Transverse colon (tissue), 4 donors: ENCODE measurements at regions of chr1 and their contacts with region 1.

Region 1: DNA sequence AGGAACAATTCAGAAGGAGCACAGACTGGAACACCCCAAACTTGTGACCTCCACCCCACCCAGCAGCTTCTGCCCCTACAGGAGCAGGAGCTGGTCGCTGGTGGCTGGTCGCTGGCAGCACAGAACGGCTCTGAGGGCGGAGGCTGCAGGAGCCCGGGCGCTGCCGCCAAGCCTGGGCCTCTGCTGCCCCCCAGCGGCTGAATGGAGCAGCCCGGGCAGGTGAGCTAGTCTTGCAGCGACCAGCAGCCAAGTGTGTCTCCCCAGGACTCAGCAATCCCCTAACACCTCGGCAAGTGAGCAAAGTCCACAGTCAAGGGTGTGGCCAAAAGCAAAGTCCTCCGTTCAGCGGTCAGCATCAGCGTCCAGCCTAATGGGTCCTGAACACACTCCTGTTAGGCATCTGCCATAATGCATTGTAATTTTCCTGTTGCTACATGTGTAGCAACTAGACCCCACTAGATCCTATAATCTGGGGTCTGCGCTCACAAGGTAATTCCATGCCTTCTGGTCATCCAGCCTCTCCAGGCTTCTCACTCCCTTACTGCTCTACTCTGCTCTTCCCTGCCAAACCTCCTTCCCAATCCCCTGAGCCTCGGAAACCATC is 12.1 kb upstream of the GJB5 start:
- DNase-seq: peak; percentile 89
- H3K4me3 ChIP-seq: no peak overlapping the region
- H3K27ac ChIP-seq: no peak overlapping the region
- H3K4me1 ChIP-seq: peaks cover 0 to 4% (median 2%) of the 10 kb centered on the region in 4 donors
- H3K27me3 ChIP-seq: no peaks in the 10 kb centered on the region
- CTCF ChIP-seq: peak; percentile 81 to 96 (median 91)
- EP300 ChIP-seq: no peak
- POLR2A ChIP-seq: no peak

Region 2: DNA sequence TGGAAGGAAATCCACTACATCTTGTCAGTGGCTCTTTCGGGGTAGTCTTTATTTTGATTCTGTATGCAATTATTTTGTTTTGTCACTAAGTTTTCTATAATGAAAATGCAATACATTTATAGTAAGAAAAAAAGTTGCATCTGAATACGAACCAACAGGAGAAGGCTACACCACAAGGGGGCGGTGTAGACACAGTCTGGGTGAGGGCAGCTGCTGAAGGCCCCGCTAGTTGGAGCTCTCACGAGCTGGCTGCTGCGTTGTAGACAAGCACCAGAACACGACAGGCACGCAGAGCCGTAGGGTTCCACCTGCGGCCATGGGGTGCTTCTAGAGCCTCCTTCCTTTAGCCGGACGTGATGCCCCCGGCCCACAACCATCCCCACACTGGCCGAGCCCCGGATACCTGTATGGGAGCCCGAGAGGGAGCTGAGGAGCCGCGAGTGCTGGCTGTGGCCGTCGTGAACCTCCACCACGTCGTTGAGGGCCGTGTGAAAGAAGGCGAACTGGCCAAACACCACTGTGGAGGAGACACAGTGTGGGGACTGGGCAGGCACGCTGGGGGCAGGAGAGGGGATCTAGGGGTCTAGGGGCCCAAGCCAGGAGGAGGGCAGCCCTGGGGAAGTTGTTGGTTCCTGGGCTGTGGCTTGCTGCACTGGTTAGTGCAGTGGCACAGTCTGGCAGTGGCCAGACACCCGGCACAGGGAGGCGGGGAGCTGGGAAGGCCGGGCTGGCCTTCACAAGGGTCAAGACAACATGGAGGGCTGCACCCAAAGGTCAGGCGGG is 1109.6 kb before region 1 on chr1:
- in situ Hi-C with region 1: loop called in 3 of 4 experiments (anchors 25 kb)
- intact Hi-C with region 1: loop called (anchors 10 kb)
- DNase-seq: peak; percentile 88
- H3K4me3 ChIP-seq: no peak overlapping the region
- H3K27ac ChIP-seq: no peak overlapping the region
- H3K4me1 ChIP-seq: no peaks in the 10 kb centered on the region
- H3K27me3 ChIP-seq: peaks cover 16% of the 10 kb centered on the region
- CTCF ChIP-seq: peak; percentile 77 to 97 (median 94)
- EP300 ChIP-seq: no peak
- POLR2A ChIP-seq: no peak

Region 3: DNA sequence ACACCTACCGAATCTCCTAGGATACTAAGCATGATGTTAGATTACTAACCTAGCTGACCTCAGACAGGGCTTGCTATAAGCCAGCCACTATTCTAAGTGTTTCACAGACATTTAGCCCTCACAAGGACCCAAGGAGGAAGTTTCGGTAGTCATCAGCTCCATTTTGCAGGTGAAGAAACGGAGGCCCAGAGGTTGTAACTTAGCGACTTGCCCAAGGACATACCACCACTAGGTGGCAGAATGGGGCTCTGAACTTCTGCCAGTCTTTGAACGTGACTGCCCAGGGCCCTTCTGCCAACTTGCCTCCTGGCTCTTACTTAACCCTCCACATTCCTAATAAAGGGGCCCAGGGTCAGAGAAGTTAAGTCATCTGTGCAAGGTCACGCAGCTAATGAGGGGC is 282.6 kb before region 1 on chr1:
- in situ Hi-C with region 1: loop called in 3 of 4 experiments (anchors 10 to 25 kb)
- intact Hi-C with region 1: no loop called
- DNase-seq: peak; percentile 47
- H3K4me3 ChIP-seq: no peak overlapping the region
- H3K27ac ChIP-seq: no peak overlapping the region
- H3K4me1 ChIP-seq: no peaks in the 10 kb centered on the region
- H3K27me3 ChIP-seq: no peaks in the 10 kb centered on the region
- CTCF ChIP-seq: peak; percentile 36 to 54 (median 41)
- EP300 ChIP-seq: no peak
- POLR2A ChIP-seq: no peak